HepG2 (cell line): ENCODE measurements at regions of chr7 and their contacts with region 1.

Region 1: GRCh38 chr7:3482147-3482964 is 181.3 kb downstream of the SDK1 start:
- DNase-seq: peak; percentile 55
- ATAC-seq: peak; percentile 93
- H3K4me3 ChIP-seq: no peak overlapping the region
- H3K27ac ChIP-seq: no peak overlapping the region
- H3K4me1 ChIP-seq: peaks cover 13% of the 10 kb centered on the region
- H3K27me3 ChIP-seq: no peaks in the 10 kb centered on the region
- CTCF ChIP-seq: peak; percentile 63
- EP300 ChIP-seq: no peak
- POLR2A ChIP-seq: no peak
- RAD21 ChIP-seq: 0 out of 2 replicates have a peak, but pooled peaks have one; percentile 15

Region 2: DNA sequence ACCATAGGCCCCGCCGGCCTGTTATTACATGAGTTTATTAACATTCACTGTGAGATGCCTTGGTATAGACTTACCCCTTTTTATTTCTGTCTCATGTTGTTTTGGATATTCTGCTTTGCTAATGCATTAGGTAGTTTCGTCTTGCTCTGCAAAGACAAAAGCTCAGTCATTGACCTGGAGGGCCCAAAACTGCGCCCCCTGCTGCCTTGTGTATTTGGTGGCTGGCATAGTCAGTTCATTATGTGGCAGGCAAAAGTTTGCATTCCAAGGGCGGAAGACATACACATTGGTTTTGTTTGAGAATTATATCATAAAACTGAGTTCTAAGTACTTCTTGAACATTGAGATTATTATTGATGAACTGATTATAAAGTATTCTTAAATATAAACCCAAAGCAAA is 191.2 kb after region 1 on chr7:
- CTCF ChIA-PET with region 1: interaction called, 10 read pairs
- POLR2A ChIA-PET with region 1: no interaction called
- in situ Hi-C with region 1: no loop called
- intact Hi-C with region 1: loop called (anchors 1 kb)
- DNase-seq: peak; percentile 23
- ATAC-seq: no peak
- H3K4me3 ChIP-seq: no peak overlapping the region
- H3K27ac ChIP-seq: no peak overlapping the region
- H3K4me1 ChIP-seq: no peaks in the 10 kb centered on the region
- H3K27me3 ChIP-seq: no peaks in the 10 kb centered on the region
- CTCF ChIP-seq: peak; percentile 53
- EP300 ChIP-seq: no peak
- POLR2A ChIP-seq: no peak
- RAD21 ChIP-seq: no peak

Region 3: GRCh38 chr7:3722396-3722922 is 240.1 kb after region 1 on chr7:
- CTCF ChIA-PET with region 1: no interaction called
- POLR2A ChIA-PET with region 1: no interaction called
- in situ Hi-C with region 1: no loop called
- intact Hi-C with region 1: loop called (anchors 2 kb)
- DNase-seq: peak; percentile 17
- ATAC-seq: peak; percentile 81
- H3K4me3 ChIP-seq: no peak overlapping the region
- H3K27ac ChIP-seq: no peak overlapping the region
- H3K4me1 ChIP-seq: no peaks in the 10 kb centered on the region
- H3K27me3 ChIP-seq: no peaks in the 10 kb centered on the region
- CTCF ChIP-seq: peak; percentile 50
- EP300 ChIP-seq: no peak
- POLR2A ChIP-seq: no peak
- RAD21 ChIP-seq: no peak

Region 4: GRCh38 chr7:3897438-3898385 is 415.4 kb after region 1 on chr7:
- CTCF ChIA-PET with region 1: interaction called, 9 read pairs
- POLR2A ChIA-PET with region 1: no interaction called
- in situ Hi-C with region 1: no loop called
- intact Hi-C with region 1: loop called (anchors 2 kb)
- DNase-seq: peak; percentile 29
- ATAC-seq: peak; percentile 62; the same call in 2 of the 3 replicates
- H3K4me3 ChIP-seq: no peak overlapping the region
- H3K27ac ChIP-seq: no peak overlapping the region
- H3K4me1 ChIP-seq: no peaks in the 10 kb centered on the region
- H3K27me3 ChIP-seq: no peaks in the 10 kb centered on the region
- CTCF ChIP-seq: peak; percentile 68
- EP300 ChIP-seq: no peak
- POLR2A ChIP-seq: no peak
- RAD21 ChIP-seq: no peak